Activated CD4-positive, alpha-beta T cell treated with anti-CD3 and anti-CD28 coated beads for 36 hours (primary cell): ENCODE measurements at regions of chr14 and their contacts with region 1.

Region 1: DNA sequence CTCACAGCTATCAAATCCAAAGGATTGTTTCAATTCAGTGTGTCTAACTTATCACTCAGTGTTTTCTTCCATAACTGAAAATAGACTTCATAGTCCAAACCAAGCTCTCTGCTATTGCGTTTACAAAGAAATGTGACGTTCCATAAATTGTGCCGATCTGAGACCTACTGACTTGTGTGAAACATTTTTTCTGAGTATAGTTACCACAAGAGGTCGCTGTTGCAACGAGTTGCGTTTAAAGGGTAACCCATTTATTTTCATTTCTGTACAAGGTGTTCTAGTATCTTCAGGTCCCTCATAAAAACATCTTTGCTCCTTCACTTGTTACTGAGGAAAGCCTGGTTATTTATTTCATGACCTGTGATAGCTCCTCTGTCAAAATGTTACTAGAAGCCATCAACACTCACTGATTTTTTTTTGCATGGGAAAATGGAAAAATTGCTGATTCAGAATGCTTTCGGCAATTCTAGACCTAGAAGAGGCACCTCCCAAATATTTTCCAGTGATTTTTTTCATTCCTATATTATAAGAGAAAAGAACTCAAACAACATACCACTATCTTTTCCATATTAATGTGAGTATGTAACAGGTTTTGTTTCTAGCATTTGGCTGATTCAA is 60.9 kb upstream of the OR4E1 start:
- DNase-seq: peak; percentile 45
- ATAC-seq: peak; percentile 52
- H3K4me3 Mint-ChIP-seq: peak overlapping the region; percentile 63
- H3K27ac Mint-ChIP-seq: peak overlapping the region; percentile 1
- H3K4me1 Mint-ChIP-seq: peaks cover 10% of the 10 kb centered on the region
- H3K27me3 Mint-ChIP-seq: peaks cover 35% of the 10 kb centered on the region

Region 2: DNA sequence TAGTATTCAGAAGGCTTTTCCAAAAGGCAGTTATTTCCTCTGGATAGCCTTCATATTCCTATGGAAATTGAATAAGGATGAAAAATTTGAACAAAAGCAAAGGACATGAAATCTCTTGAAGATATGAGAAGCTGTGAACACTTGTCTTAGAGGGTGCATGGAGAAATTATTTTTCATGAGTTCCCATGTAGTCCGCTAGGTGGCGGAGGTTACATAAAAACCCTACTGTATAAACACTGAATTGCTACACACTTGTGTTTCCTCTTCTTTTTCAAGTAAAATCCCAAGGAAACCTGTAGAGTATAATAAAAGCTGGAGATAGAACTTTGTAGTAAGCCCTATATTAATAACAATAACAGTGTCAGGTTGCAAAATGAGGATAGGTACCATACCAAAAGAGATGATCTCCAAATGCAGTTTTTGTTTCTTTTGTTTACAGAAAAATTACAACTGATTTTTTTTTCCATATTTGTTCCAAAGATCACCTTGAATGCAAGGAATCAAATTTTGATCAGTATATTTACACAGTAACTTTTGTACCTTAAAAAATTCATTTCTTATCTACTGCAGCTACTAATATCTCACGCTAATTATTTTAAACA is 23.1 kb before region 1 on chr14:
- CTCF ChIA-PET with region 1: interaction called, 14 read pairs
- POLR2A ChIA-PET with region 1: no interaction called
- intact Hi-C with region 1: no loop called
- DNase-seq: peak; percentile 37
- ATAC-seq: peak; percentile 47
- H3K4me3 Mint-ChIP-seq: peak overlapping the region; percentile 60
- H3K27ac Mint-ChIP-seq: no peak overlapping the region
- H3K4me1 Mint-ChIP-seq: peaks cover 3% of the 10 kb centered on the region
- H3K27me3 Mint-ChIP-seq: peaks cover 23% of the 10 kb centered on the region

Region 3: GRCh38 chr14:21723431-21724045 is 11.0 kb before region 1 on chr14:
- CTCF ChIA-PET with region 1: interaction called, 25 read pairs
- POLR2A ChIA-PET with region 1: no interaction called
- intact Hi-C with region 1: no loop called
- DNase-seq: peak; percentile 71
- ATAC-seq: peak; percentile 90
- H3K4me3 Mint-ChIP-seq: peak overlapping the region; percentile 70
- H3K27ac Mint-ChIP-seq: peak overlapping the region; percentile 77
- H3K4me1 Mint-ChIP-seq: no peaks in the 10 kb centered on the region
- H3K27me3 Mint-ChIP-seq: peaks cover 21% of the 10 kb centered on the region

Region 4: DNA sequence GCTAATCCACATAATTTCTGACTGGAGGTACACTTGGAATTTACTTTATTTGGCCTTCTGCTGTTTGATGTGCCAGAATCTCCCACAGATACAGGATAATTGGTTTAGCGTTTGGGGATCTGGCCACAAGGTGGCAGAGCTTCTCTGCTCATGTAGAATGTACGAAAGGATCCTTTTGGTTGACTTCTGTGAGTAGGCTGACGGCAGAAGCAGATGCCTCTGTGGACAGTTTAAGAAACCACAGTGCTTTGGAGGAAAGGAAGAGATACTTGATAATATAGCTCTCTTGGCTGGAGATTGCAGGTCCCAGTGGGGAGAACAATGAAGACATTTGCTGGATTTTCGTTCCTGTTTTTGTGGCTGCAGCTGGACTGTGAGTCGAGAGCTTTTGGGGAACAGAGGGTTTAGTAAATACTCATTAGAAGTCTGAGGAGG is 14.3 kb after region 1 on chr14:
- CTCF ChIA-PET with region 1: interaction called, 10 read pairs
- POLR2A ChIA-PET with region 1: no interaction called
- intact Hi-C with region 1: no loop called
- DNase-seq: peak; percentile 75
- ATAC-seq: peak; percentile 91
- H3K4me3 Mint-ChIP-seq: peak overlapping the region; percentile 52
- H3K27ac Mint-ChIP-seq: peak overlapping the region; percentile 71
- H3K4me1 Mint-ChIP-seq: peaks cover 9% of the 10 kb centered on the region
- H3K27me3 Mint-ChIP-seq: no peaks in the 10 kb centered on the region

Region 5: DNA sequence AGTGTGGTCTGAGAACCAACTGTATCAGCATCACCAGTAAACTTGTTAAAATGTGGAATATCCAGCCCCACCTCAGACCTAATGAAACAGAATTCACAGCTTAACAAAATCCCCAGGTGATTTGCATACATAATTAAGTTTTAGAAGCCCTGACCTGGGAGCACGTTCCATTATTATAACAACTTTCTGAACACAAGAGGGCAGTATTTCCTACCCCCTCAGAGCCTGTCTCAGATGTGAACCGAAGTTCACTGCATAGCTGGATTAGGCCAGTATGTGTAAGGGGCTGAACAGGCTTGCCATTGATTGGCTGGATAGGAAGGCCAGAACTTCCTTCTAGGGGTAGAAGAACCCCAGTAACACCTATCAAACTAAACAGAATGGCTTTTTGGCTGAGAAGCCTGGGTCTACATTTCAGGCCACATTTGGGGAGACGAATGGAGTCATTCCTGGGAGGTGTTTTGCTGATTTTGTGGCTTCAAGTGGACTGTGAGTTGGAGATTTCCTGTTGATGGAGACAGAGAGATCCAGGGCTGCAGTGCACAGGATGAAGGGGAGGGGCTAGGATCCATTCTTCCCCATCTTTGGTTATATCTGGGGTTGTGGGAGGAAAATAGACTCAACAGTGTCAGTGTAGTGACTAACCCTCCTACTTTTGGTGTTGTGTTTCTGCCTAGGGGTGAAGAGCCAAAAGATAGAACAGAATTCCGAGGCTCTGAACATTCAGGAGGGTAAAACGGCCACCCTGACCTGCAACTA is 33.7 kb after region 1 on chr14:
- CTCF ChIA-PET with region 1: interaction called, 10 read pairs
- POLR2A ChIA-PET with region 1: no interaction called
- intact Hi-C with region 1: no loop called
- DNase-seq: peak; percentile 28
- ATAC-seq: peak; percentile 95
- H3K4me3 Mint-ChIP-seq: peak overlapping the region; percentile 65
- H3K27ac Mint-ChIP-seq: peak overlapping the region; percentile 55
- H3K4me1 Mint-ChIP-seq: peaks cover 9% of the 10 kb centered on the region
- H3K27me3 Mint-ChIP-seq: peaks cover 7% of the 10 kb centered on the region